Activated B cell treated with CpG ODN at 0.5 μM for 24 hours (primary cell): ENCODE measurements at regions of chr6 and their contacts with region 1.

Region 1: DNA sequence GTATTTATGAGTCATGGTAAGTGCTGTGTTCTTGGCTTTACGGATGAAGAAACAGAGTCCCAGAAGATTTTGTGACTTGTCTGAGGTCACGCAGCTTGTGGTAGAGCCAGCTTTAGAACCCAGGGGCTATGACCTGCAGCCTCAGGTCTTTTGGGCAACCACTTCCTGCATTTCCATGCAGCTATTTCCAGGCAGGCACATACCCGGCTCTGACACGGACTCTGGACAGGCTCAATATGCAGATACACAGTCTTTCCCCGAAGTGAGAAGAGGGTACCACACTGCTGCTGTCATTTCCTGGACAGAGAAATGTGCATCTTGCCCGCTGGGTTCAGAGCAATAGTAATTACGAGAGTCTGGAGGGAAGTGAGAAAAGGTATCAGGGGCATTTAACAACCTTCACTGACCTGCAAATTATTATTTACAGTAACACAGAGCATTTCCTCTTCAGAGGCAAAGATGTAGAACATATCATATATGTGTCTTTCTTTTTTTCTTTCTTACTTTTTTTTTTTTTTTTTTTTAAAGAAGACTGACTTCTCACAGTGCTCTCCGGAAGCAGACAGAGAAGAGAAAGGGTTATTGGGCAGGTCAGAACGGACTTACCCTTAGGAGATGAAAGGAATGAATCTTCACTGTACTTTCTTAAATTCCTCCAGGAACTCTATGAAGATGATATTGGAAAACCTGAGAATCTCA is 185.1 kb downstream of the CLIC5 start:
- DNase-seq: peak; percentile 50
- ATAC-seq: peak; percentile 86
- H3K4me3 Mint-ChIP-seq: peak overlapping the region; percentile 77
- H3K27ac Mint-ChIP-seq: peak overlapping the region; percentile 75
- H3K4me1 Mint-ChIP-seq: peaks cover 34% of the 10 kb centered on the region
- H3K27me3 Mint-ChIP-seq: peaks cover 7% of the 10 kb centered on the region
- CTCF ChIP-seq: no peak

Region 2: GRCh38 chr6:45377554-45378333 is 452.8 kb before region 1 on chr6 and contains the start of gene SUPT3H:
- CTCF ChIA-PET with region 1: no interaction called
- POLR2A ChIA-PET with region 1: interaction called, 7 read pairs
- intact Hi-C with region 1: loop called (anchors 1 kb)
- DNase-seq: peak; percentile 91
- ATAC-seq: peak; percentile 79
- H3K4me3 Mint-ChIP-seq: peak within 1 kb of the TSS; percentile 99
- H3K27ac Mint-ChIP-seq: peak within 1 kb of the TSS; percentile 99
- H3K4me1 Mint-ChIP-seq: peaks cover 26% of the 10 kb centered on the region
- H3K27me3 Mint-ChIP-seq: no peaks in the 10 kb centered on the region
- CTCF ChIP-seq: no peak
- total RNA-seq, gene SUPT3H: 9.9 and 10.4 TPM in 2 replicates

Region 3: DNA sequence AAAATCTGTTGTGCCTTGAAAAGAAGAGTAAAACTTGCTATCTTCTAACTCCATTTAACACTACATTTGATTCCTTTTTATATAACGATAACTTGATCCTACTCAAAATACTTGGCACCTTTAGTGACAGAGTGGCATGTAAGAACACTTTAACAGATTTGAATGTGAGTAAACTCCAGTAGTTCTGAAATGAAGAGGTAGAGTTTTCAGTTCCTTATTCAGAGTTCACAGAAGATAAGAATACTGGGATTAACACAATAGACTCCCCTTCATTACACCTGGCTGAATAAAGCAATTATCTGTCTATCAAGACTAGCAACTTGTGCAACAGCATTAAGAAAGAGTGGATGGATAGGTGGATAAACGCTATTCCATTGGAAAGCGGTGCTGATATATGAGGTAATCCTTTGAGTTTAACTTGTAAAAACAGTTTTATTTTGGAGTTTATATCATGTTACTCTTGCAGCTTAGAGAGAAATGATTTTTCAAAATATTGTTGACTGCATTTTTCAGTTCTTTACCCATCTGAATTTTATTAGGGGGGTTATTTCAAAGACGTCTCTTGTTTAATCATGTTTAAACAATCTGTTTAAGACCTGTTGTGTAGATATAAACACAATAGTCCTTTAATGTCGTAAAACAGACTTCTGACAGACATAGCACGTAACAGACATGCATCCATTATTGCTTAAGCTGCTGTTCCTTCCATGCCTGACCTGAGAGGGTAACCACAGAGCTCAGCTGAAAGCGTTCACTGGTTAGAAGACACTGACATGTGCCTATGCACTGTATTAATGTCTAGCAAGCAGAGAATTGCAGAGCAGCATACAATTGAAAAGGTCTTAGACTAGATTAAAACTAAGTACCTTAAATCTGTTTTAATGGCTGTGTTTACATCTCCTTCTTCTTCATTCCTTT is 350.5 kb before region 1 on chr6:
- CTCF ChIA-PET with region 1: no interaction called
- POLR2A ChIA-PET with region 1: no interaction called
- intact Hi-C with region 1: loop called (anchors 5 kb)
- DNase-seq: no peak
- ATAC-seq: peak; percentile 65
- H3K4me3 Mint-ChIP-seq: no peak overlapping the region
- H3K27ac Mint-ChIP-seq: no peak overlapping the region
- H3K4me1 Mint-ChIP-seq: peaks cover 18% of the 10 kb centered on the region
- H3K27me3 Mint-ChIP-seq: no peaks in the 10 kb centered on the region
- CTCF ChIP-seq: no peak

Region 4: GRCh38 chr6:45677381-45678284 is 153.0 kb before region 1 on chr6:
- CTCF ChIA-PET with region 1: no interaction called
- POLR2A ChIA-PET with region 1: interaction called, 4 read pairs
- intact Hi-C with region 1: loop called (anchors 1 kb)
- DNase-seq: peak; percentile 54
- ATAC-seq: peak; percentile 76
- H3K4me3 Mint-ChIP-seq: peak overlapping the region; percentile 73
- H3K27ac Mint-ChIP-seq: peak overlapping the region; percentile 85
- H3K4me1 Mint-ChIP-seq: peaks cover 53% of the 10 kb centered on the region
- H3K27me3 Mint-ChIP-seq: no peaks in the 10 kb centered on the region
- CTCF ChIP-seq: no peak

Region 5: GRCh38 chr6:45864651-45865050 is 34.1 kb after region 1 on chr6:
- CTCF ChIA-PET with region 1: no interaction called
- POLR2A ChIA-PET with region 1: no interaction called
- intact Hi-C with region 1: no loop called
- DNase-seq: no peak
- ATAC-seq: no peak
- H3K4me3 Mint-ChIP-seq: no peak overlapping the region
- H3K27ac Mint-ChIP-seq: no peak overlapping the region
- H3K4me1 Mint-ChIP-seq: no peaks in the 10 kb centered on the region
- H3K27me3 Mint-ChIP-seq: peaks cover 2% of the 10 kb centered on the region
- CTCF ChIP-seq: no peak

Region 6: DNA sequence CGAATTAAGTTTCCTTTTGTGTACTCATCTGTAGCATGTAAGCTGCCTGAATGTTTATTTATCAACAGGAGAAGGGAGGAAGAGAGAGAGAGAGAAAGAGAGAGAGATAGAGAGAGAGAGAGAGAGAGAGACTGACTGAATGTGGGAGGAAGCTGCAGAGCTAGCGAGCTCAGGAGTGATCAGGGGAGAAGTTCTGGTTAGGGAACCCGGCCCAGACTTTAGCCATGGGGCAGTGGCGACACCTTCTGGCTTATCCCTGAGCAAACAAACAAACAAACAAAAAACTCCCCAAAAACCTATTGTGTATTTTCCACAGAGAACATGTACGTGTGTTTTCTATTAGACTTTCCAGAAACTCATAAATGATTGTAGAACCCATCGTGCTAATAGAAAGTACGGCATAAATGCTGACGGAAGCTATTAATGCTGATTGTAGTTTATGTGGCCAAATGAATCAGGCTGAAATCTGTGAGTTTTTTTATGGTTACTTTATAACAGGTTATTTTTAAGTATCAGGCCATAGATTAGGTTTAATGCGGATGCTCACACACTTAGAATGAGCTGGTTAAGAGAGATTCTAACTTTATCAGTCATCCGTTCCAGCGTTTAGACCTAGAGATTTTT is 92.2 kb after region 1 on chr6:
- CTCF ChIA-PET with region 1: interaction called, 5 read pairs
- POLR2A ChIA-PET with region 1: no interaction called
- intact Hi-C with region 1: loop called (anchors 5 kb)
- DNase-seq: peak; percentile 26
- ATAC-seq: no peak
- H3K4me3 Mint-ChIP-seq: no peak overlapping the region
- H3K27ac Mint-ChIP-seq: no peak overlapping the region
- H3K4me1 Mint-ChIP-seq: no peaks in the 10 kb centered on the region
- H3K27me3 Mint-ChIP-seq: peaks cover 7% of the 10 kb centered on the region
- CTCF ChIP-seq: peak; percentile 47

Region 7: GRCh38 chr6:46129629-46130511 is 299.3 kb after region 1 on chr6 and contains the start of gene ENPP4:
- CTCF ChIA-PET with region 1: no interaction called
- POLR2A ChIA-PET with region 1: no interaction called
- intact Hi-C with region 1: loop called (anchors 1 kb)
- DNase-seq: peak; percentile 76
- ATAC-seq: peak; percentile 99
- H3K4me3 Mint-ChIP-seq: peak within 1 kb of the TSS; percentile 95
- H3K27ac Mint-ChIP-seq: peak within 1 kb of the TSS; percentile 87
- H3K4me1 Mint-ChIP-seq: peaks cover 48% of the 10 kb centered on the region
- H3K27me3 Mint-ChIP-seq: no peaks in the 10 kb centered on the region
- CTCF ChIP-seq: no peak
- total RNA-seq, gene ENPP4: 13.0 and 13.6 TPM in 2 replicates